ENCODE measurements at regions of chr9 and their contacts with region 1.

Region 1: GRCh38 chr9:129626079-129626624 is at the start of gene NTMT1:
- DNase-seq: peak; percentile 39
- ATAC-seq: peak; percentile 80
- H3K4me3 ChIP-seq: peak within 1 kb of the TSS; percentile 93
- H3K27ac ChIP-seq: peak within 1 kb of the TSS; percentile 90
- H3K4me1 ChIP-seq: peaks cover 18% of the 10 kb centered on the region
- H3K27me3 ChIP-seq: peaks cover 0 to 2% of the 10 kb centered on the region in 2 experiments; a peak in 2 of 4 replicates
- CTCF ChIP-seq: no peak
- EP300 ChIP-seq: no peak; a peak in 1 of 4 replicates
- POLR2A ChIP-seq: peak; percentile 98
- RAD21 ChIP-seq: no peak
- polyA plus RNA-seq, gene NTMT1: 12.8 to 18.3 TPM

Region 2: GRCh38 chr9:129125476-129125875 is 500.7 kb before region 1 on chr9:
- CTCF ChIA-PET with region 1: interaction called, 94 read pairs
- POLR2A ChIA-PET with region 1: no interaction called
- RAD21 ChIA-PET with region 1: interaction called, 37 read pairs
- SMC1A ChIA-PET with region 1: interaction called, 50 read pairs
- in situ Hi-C with region 1: no loop called
- intact Hi-C with region 1: no loop called
- DNase-seq: no peak
- ATAC-seq: peak; percentile 97
- H3K4me3 ChIP-seq: no peak overlapping the region
- H3K27ac ChIP-seq: no peak overlapping the region
- H3K4me1 ChIP-seq: peaks cover 3% of the 10 kb centered on the region; the same call in 1 of the 2 replicates
- H3K27me3 ChIP-seq: no peaks in the 10 kb centered on the region
- CTCF ChIP-seq: no peak
- EP300 ChIP-seq: no peak
- POLR2A ChIP-seq: no peak
- RAD21 ChIP-seq: no peak

Region 3: GRCh38 chr9:129148463-129149204 is 477.5 kb before region 1 on chr9:
- CTCF ChIA-PET with region 1: interaction called, 194 read pairs
- POLR2A ChIA-PET with region 1: interaction called, 11 read pairs
- RAD21 ChIA-PET with region 1: interaction called, 130 read pairs
- SMC1A ChIA-PET with region 1: interaction called, 83 read pairs
- in situ Hi-C with region 1: no loop called
- intact Hi-C with region 1: no loop called
- DNase-seq: no peak
- ATAC-seq: peak; percentile 81
- H3K4me3 ChIP-seq: no peak overlapping the region
- H3K27ac ChIP-seq: peak overlapping the region; percentile 17
- H3K4me1 ChIP-seq: peaks cover 15% of the 10 kb centered on the region
- H3K27me3 ChIP-seq: no peaks in the 10 kb centered on the region
- CTCF ChIP-seq: no peak
- EP300 ChIP-seq: peak; percentile 28; a peak in 2 of 4 replicates
- POLR2A ChIP-seq: no peak; the same call in 1 of the 2 replicates
- RAD21 ChIP-seq: no peak

Region 4: GRCh38 chr9:129610473-129611301 is 15.5 kb before region 1 on chr9:
- CTCF ChIA-PET with region 1: interaction called, 30 read pairs
- POLR2A ChIA-PET with region 1: interaction called, 7 read pairs
- RAD21 ChIA-PET with region 1: interaction called, 15 read pairs
- SMC1A ChIA-PET with region 1: interaction called, 13 read pairs
- in situ Hi-C with region 1: no loop called
- intact Hi-C with region 1: no loop called
- DNase-seq: no peak
- ATAC-seq: peak; percentile 77
- H3K4me3 ChIP-seq: peak overlapping the region; percentile 81; the same call in 1 of the 2 replicates
- H3K27ac ChIP-seq: no peak overlapping the region
- H3K4me1 ChIP-seq: peaks cover 8% of the 10 kb centered on the region
- H3K27me3 ChIP-seq: no peaks in the 10 kb centered on the region
- CTCF ChIP-seq: peak; percentile 80 to 91 (median 90)
- EP300 ChIP-seq: no peak
- POLR2A ChIP-seq: no peak
- RAD21 ChIP-seq: peak; percentile 89

Measured in GM12878 (cell line).